Naive thymus-derived CD4-positive, alpha-beta T cell (primary cell): ENCODE measurements at regions of chr22 and their contacts with region 1.

Region 1: DNA sequence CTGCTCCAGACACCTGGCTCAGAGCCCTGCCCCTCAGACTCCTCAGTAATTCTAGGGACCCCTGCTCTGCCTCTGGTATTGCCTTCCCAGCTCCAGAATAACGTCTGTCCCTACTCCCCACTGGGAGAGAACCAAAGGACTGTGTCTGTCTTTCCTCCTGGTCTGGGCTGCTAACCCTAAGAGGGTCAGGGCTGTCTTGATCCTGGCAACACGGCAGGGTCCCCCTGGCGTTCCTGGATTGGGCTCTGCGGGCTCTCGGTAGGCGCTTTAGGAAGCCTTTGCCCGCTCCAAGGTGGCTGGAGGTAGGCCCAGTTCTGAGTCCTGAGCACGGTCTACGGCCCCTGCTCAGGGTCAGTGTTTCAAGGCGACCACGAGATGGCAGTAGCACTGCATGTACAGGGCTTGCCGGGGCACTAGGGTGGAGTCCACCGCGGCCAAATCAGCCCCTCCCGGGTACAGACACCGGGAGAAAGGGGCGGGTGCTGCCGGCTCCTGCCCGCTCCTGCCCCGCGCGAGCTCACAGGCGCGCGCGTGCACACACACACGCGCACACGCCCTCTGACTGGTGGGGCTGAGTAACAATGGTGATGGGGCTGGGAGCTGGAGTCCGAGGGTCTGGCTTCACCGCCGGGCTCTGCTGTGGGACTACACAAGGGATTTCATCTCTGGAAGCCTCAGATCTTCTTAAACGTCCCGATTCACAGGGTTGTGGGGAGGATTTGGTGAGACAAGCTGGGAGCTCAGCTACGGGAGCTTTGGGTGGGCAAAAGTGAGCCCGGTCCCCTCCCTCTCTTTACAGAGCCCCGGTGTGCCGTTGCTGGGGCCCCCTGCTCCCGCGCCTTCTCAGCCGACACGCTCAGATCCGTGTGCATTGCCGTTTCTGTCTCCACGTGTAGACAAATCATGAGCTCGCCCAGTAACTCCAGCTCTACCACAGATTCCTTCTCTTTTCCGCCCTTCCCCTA is 30.1 kb upstream of the HMOX1 start:
- DNase-seq: peak; percentile 52 to 85 (median 75)
- ATAC-seq: peak; percentile 88
- H3K4me3 ChIP-seq: peak overlapping the region; percentile 71
- H3K4me3 Mint-ChIP-seq: peak overlapping the region; percentile 39 to 88 (median 82)
- H3K27ac ChIP-seq: no peak overlapping the region
- H3K27ac Mint-ChIP-seq: peak overlapping the region in 6 of 9 donors; percentile 12 to 78 (median 37)
- H3K4me1 ChIP-seq: peaks cover 11 to 16% of the 10 kb centered on the region in 2 donors
- H3K4me1 Mint-ChIP-seq: peaks cover 8 to 29% (median 26%) of the 10 kb centered on the region in 7 donors
- H3K27me3 ChIP-seq: no peaks in the 10 kb centered on the region
- H3K27me3 Mint-ChIP-seq: peaks cover 4 to 8% (median 5%) of the 10 kb centered on the region in 5 donors

Region 2: GRCh38 chr22:34526681-34527080 is 824.1 kb before region 1 on chr22:
- CTCF ChIA-PET with region 1: no interaction called
- POLR2A ChIA-PET with region 1: no interaction called
- intact Hi-C with region 1: no loop called
- DNase-seq: no peak
- ATAC-seq: no peak
- H3K4me3 ChIP-seq: no peak overlapping the region
- H3K4me3 Mint-ChIP-seq: no peak overlapping the region
- H3K27ac ChIP-seq: no peak overlapping the region
- H3K27ac Mint-ChIP-seq: no peak overlapping the region
- H3K4me1 ChIP-seq: no peaks in the 10 kb centered on the region
- H3K4me1 Mint-ChIP-seq: no peaks in the 10 kb centered on the region
- H3K27me3 ChIP-seq: no peaks in the 10 kb centered on the region
- H3K27me3 Mint-ChIP-seq: peaks cover 0 to 8% (median 4%) of the 10 kb centered on the region in 5 donors

Region 3: GRCh38 chr22:35399678-35400334 is 49.0 kb after region 1 on chr22 and contains the start of gene MCM5:
- CTCF ChIA-PET with region 1: interaction called, 3 read pairs
- POLR2A ChIA-PET with region 1: no interaction called
- intact Hi-C with region 1: loop called (anchors 1 kb)
- DNase-seq: peak; percentile 86 to 98 (median 97)
- ATAC-seq: peak; percentile 99
- H3K4me3 ChIP-seq: peak within 1 kb of the TSS; percentile 86
- H3K4me3 Mint-ChIP-seq: peak within 1 kb of the TSS; percentile 94 to 99 (median 99)
- H3K27ac ChIP-seq: peak within 1 kb of the TSS; percentile 80
- H3K27ac Mint-ChIP-seq: peak within 1 kb of the TSS; percentile 90 to 99 (median 96)
- H3K4me1 ChIP-seq: peaks cover 5 to 7% of the 10 kb centered on the region in 2 donors
- H3K4me1 Mint-ChIP-seq: peaks cover 16 to 35% (median 19%) of the 10 kb centered on the region in 7 donors
- H3K27me3 ChIP-seq: no peaks in the 10 kb centered on the region
- H3K27me3 Mint-ChIP-seq: no peaks in the 10 kb centered on the region
- total RNA-seq, gene MCM5: 34.7 to 208 (median 50.7) TPM

Region 4: DNA sequence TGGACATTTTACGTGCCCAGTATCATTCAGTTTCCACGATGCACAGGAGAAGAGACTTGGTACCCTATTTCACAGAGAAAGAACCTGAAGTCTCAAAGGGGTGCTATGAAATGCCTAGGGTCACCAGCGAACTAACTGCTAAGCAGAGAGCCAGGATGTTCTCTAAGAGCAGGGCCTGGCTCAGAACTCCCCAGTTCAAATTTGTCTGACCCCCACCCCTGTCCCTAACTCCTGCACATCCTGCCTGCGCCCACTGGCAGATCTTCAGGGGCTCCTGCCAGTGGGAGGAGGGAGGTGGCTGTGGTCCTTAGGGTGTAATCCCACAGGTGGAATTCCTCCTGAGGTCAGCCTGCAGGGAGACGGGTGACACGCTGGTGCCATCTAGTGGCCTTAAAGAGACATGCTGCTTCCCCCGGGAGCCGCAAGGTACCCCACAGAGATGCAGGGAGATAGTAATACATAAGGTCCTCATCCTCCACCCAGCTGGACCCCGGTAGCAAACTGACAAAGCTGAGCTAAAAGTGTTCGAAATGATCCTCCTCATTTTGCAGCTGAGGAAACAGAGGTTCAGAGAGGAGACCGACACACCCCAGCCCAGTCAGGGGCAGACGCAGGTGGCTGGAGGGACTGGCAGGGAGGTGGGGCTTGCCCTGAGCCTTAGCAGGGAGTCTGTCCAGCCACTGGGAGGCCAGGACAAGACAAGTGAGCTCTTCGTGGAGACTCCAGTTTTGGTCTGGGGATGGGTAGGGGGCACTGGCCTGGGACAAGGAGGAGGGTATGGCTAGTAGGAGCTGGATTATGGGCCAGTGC is 232.2 kb after region 1 on chr22:
- CTCF ChIA-PET with region 1: interaction called, 8 read pairs
- POLR2A ChIA-PET with region 1: no interaction called
- intact Hi-C with region 1: loop called (anchors 1 kb)
- DNase-seq: peak; percentile 22 to 70 (median 40)
- ATAC-seq: peak; percentile 82
- H3K4me3 ChIP-seq: no peak overlapping the region
- H3K4me3 Mint-ChIP-seq: no peak overlapping the region
- H3K27ac ChIP-seq: no peak overlapping the region
- H3K27ac Mint-ChIP-seq: no peak overlapping the region
- H3K4me1 ChIP-seq: no peaks in the 10 kb centered on the region
- H3K4me1 Mint-ChIP-seq: peaks cover 0 to 6% (median 0%) of the 10 kb centered on the region in 7 donors
- H3K27me3 ChIP-seq: no peaks in the 10 kb centered on the region
- H3K27me3 Mint-ChIP-seq: peaks cover 0 to 7% (median 0%) of the 10 kb centered on the region in 5 donors

Region 5: GRCh38 chr22:35921777-35922176 is 571.0 kb after region 1 on chr22:
- CTCF ChIA-PET with region 1: no interaction called
- POLR2A ChIA-PET with region 1: no interaction called
- intact Hi-C with region 1: loop called in 1 of 2 experiments (anchors 1 kb)
- DNase-seq: peak in 6 of 9 donors; percentile 21 to 36 (median 30)
- ATAC-seq: peak; percentile 49
- H3K4me3 ChIP-seq: no peak overlapping the region
- H3K4me3 Mint-ChIP-seq: no peak overlapping the region
- H3K27ac ChIP-seq: no peak overlapping the region
- H3K27ac Mint-ChIP-seq: peak overlapping the region in 1 of 9 donors; percentile 4
- H3K4me1 ChIP-seq: no peaks in the 10 kb centered on the region
- H3K4me1 Mint-ChIP-seq: peaks cover 0 to 5% (median 0%) of the 10 kb centered on the region in 7 donors
- H3K27me3 ChIP-seq: no peaks in the 10 kb centered on the region
- H3K27me3 Mint-ChIP-seq: peaks cover 0 to 4% (median 0%) of the 10 kb centered on the region in 5 donors

Region 6: DNA sequence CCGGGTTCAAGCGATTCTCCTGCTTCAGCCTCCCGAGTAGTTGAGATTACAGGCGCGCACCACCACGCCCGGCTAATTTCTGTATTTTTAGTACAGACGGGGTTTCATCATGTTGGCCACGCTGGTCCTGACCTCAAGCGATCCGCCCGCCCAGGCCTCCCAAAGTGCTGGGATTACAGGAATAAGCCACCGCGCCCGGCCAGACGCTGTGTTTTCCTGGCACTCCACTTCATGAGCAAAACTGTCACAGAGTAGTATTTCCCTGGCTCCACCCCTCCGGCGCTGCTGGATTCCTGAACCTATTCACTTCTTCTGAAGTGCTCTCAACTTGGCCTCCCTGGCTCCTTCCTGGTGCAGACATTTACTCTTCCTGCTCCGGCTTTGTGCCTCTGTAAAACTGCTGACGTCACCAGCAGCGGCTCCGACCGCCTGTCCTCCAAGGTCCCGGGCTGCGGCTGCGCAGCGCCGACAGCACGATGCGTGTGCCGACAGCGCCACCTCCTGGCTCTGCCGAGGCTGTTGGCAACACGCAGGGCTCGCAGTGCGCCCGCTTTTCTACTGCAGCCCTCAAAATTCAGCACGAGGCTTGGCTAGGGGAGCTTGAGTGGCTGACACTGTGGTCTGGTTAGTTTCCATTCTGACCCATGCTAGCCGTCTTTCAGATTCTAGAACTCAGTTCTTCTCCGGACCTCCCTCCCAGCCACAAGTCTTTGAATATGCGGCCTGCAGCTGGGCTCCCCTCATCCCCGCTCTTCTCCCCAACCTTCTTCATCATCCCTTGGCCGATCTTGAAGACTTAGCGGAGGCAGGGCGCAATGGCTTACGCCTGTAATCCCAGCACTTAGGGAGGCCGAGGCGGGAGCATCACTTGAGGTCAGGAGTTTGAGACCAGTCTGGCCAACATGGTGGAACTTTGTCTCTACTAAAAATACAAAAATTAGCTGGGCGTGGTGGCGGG is 773.1 kb after region 1 on chr22:
- CTCF ChIA-PET with region 1: interaction called, 9 read pairs
- POLR2A ChIA-PET with region 1: no interaction called
- intact Hi-C with region 1: loop called in 1 of 2 experiments (anchors 1 kb)
- DNase-seq: peak; percentile 87 to 94 (median 92)
- ATAC-seq: peak; percentile 100
- H3K4me3 ChIP-seq: peak overlapping the region; percentile 45
- H3K4me3 Mint-ChIP-seq: peak overlapping the region; percentile 68 to 89 (median 84)
- H3K27ac ChIP-seq: peak overlapping the region; percentile 63
- H3K27ac Mint-ChIP-seq: peak overlapping the region; percentile 87 to 96 (median 93)
- H3K4me1 ChIP-seq: no peaks in the 10 kb centered on the region
- H3K4me1 Mint-ChIP-seq: peaks cover 8 to 13% (median 11%) of the 10 kb centered on the region in 7 donors
- H3K27me3 ChIP-seq: no peaks in the 10 kb centered on the region
- H3K27me3 Mint-ChIP-seq: peaks cover 0 to 10% (median 0%) of the 10 kb centered on the region in 5 donors